ENCODE measurements at regions of chr11 and their contacts with region 1.

Region 1: DNA sequence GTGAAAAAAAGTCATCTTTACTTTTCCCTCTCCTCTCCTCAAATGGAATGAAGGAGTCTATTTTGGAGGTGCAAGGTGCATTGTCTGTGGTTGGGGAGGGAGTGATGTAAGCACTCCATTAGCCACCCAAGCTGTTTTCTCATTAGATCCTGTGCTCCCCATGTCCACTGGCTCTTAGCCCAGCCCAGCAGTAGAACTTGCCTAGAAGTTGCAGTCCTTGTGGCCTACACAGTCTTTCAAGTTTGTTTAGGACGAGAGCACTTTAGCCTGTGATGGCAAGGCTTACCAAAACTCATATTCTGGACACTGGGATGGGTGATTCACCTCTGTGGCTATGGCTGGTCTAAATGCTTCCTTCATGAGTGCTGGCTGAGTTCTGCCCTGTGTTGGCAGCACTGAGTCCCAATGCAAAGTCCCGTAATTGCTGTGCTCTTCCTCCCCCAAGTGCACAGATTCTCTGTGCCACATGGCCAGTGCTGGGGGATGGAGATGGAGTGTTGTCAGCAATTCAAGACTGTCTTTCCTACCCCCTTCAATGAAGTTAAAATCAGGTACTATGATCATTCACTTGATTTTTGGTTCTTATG is 15.8 kb downstream of the SLC22A25 start:
- DNase-seq: no peak
- H3K4me3 ChIP-seq: no peak overlapping the region
- H3K27ac ChIP-seq: no peak overlapping the region
- H3K4me1 ChIP-seq: no peaks in the 10 kb centered on the region
- H3K27me3 ChIP-seq: no peaks in the 10 kb centered on the region
- CTCF ChIP-seq: no peak

Region 2: DNA sequence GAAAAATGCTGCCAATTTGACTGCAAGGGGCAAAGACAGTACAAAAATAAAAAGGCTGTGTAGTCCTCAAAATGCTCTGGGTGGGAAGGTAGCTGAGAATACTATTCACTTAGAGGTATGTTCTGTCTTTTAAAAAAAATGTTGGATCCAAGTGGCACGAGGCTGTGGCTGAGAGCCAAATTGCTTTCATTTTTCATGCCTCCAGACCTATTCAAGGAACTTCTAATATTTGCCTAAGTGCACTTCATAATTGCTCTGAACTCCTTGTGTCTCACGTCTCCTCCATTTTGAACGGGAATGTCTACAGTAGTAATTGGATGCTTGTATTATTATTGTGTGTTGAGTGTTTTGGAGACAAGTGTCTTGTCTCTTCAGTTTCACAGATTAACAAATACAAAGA is 34.9 kb after region 1 on chr11:
- CTCF ChIA-PET with region 1: no interaction called
- dilution Hi-C with region 1: loop called (anchors 5 kb)
- in situ Hi-C with region 1: no loop called
- intact Hi-C with region 1: no loop called
- DNase-seq: no peak
- H3K4me3 ChIP-seq: no peak overlapping the region
- H3K27ac ChIP-seq: no peak overlapping the region
- H3K4me1 ChIP-seq: no peaks in the 10 kb centered on the region
- H3K27me3 ChIP-seq: no peaks in the 10 kb centered on the region
- CTCF ChIP-seq: no peak

Region 3: GRCh38 chr11:63289658-63290057 is 62.0 kb after region 1 on chr11:
- CTCF ChIA-PET with region 1: no interaction called
- dilution Hi-C with region 1: no loop called
- in situ Hi-C with region 1: no loop called
- intact Hi-C with region 1: no loop called
- DNase-seq: no peak
- H3K4me3 ChIP-seq: no peak overlapping the region
- H3K27ac ChIP-seq: no peak overlapping the region
- H3K4me1 ChIP-seq: no peaks in the 10 kb centered on the region
- H3K27me3 ChIP-seq: no peaks in the 10 kb centered on the region
- CTCF ChIP-seq: no peak